H1 (cell line): ENCODE measurements at regions of chr12 and their contacts with region 1.

Region 1: GRCh38 chr12:53054112-53054833 is 4.4 kb downstream of the TNS2 start:
- DNase-seq: peak; percentile 87 to 97
- H3K4me3 ChIP-seq: peak overlapping the region; percentile 82 to 86 (median 84)
- H3K27ac ChIP-seq: peak overlapping the region; percentile 75; the same call in 1 of the 2 replicates
- H3K4me1 ChIP-seq: peaks cover 4 to 30% (median 23%) of the 10 kb centered on the region in 4 experiments
- H3K27me3 ChIP-seq: peaks cover 0 to 12% (median 3%) of the 10 kb centered on the region in 4 experiments; a peak in 4 of 7 replicates
- CTCF ChIP-seq: no peak
- EP300 ChIP-seq: no peak
- POLR2A ChIP-seq: peak in 1 of 2 experiments; percentile 86; a peak in 2 of 3 replicates
- RAD21 ChIP-seq: no peak

Region 2: GRCh38 chr12:52847335-52848102 is 206.8 kb before region 1 on chr12:
- CTCF ChIA-PET with region 1: no interaction called
- POLR2A ChIA-PET with region 1: no interaction called
- DNase-seq: no peak
- H3K4me3 ChIP-seq: no peak overlapping the region
- H3K27ac ChIP-seq: no peak overlapping the region
- H3K4me1 ChIP-seq: no peaks in the 10 kb centered on the region
- H3K27me3 ChIP-seq: no peaks in the 10 kb centered on the region; a peak in 1 of 7 replicates
- CTCF ChIP-seq: no peak
- EP300 ChIP-seq: no peak
- POLR2A ChIP-seq: no peak
- RAD21 ChIP-seq: no peak

Region 3: DNA sequence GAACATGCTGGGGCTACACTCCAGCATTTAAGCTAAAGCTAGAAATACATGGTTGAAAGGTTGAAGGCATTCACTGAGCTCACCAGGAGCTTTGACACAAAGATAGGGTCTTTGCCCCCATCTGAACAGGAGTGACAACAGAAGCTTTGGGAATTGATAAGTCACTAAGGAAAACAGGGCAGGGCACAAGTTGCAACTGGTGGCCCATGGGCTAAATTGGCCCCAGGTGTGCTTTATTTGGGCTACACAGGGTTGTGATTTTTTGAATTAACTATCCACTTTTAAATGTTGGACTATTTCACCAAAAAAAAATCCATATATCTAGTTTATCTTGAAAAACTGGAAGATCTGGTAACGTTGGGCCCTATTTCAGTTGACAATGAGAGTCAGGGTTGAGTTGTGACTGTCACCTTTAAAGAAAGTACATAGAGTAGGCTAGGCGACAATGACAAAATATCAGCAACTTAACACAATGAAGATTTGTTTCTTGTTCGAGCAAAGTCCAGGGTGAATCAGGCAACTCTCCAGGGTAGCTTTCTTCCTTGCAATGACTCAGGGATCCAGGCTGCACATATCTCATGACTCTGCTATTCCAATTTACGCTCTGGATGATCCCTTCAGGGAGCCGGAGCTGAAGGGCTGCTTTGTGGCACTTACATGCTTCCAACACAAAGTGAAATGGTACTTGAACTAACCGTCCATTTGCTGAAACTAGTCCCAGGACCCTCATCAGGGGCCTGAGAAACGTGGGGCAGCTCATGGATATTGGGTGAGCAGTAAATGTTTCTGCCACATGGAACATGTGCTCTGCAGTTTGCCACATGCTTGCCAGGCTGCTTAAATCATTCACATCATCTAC is 61.3 kb before region 1 on chr12:
- CTCF ChIA-PET with region 1: no interaction called
- POLR2A ChIA-PET with region 1: no interaction called
- DNase-seq: no peak
- H3K4me3 ChIP-seq: no peak overlapping the region
- H3K27ac ChIP-seq: no peak overlapping the region
- H3K4me1 ChIP-seq: peaks cover 0 to 4% (median 0%) of the 10 kb centered on the region in 4 experiments; a peak in 1 of 7 replicates
- H3K27me3 ChIP-seq: no peaks in the 10 kb centered on the region
- CTCF ChIP-seq: no peak
- EP300 ChIP-seq: no peak
- POLR2A ChIP-seq: no peak
- RAD21 ChIP-seq: no peak

Region 4: GRCh38 chr12:53039851-53040250 is 14.4 kb before region 1 on chr12:
- CTCF ChIA-PET with region 1: interaction called, 258 read pairs
- POLR2A ChIA-PET with region 1: interaction called, 23 read pairs
- DNase-seq: no peak
- H3K4me3 ChIP-seq: no peak overlapping the region
- H3K27ac ChIP-seq: no peak overlapping the region
- H3K4me1 ChIP-seq: peaks cover 2 to 15% (median 9%) of the 10 kb centered on the region in 4 experiments; a peak in 6 of 7 replicates
- H3K27me3 ChIP-seq: peaks cover 0 to 9% (median 8%) of the 10 kb centered on the region in 4 experiments; a peak in 6 of 7 replicates
- CTCF ChIP-seq: no peak
- EP300 ChIP-seq: no peak
- POLR2A ChIP-seq: no peak
- RAD21 ChIP-seq: no peak

Region 5: DNA sequence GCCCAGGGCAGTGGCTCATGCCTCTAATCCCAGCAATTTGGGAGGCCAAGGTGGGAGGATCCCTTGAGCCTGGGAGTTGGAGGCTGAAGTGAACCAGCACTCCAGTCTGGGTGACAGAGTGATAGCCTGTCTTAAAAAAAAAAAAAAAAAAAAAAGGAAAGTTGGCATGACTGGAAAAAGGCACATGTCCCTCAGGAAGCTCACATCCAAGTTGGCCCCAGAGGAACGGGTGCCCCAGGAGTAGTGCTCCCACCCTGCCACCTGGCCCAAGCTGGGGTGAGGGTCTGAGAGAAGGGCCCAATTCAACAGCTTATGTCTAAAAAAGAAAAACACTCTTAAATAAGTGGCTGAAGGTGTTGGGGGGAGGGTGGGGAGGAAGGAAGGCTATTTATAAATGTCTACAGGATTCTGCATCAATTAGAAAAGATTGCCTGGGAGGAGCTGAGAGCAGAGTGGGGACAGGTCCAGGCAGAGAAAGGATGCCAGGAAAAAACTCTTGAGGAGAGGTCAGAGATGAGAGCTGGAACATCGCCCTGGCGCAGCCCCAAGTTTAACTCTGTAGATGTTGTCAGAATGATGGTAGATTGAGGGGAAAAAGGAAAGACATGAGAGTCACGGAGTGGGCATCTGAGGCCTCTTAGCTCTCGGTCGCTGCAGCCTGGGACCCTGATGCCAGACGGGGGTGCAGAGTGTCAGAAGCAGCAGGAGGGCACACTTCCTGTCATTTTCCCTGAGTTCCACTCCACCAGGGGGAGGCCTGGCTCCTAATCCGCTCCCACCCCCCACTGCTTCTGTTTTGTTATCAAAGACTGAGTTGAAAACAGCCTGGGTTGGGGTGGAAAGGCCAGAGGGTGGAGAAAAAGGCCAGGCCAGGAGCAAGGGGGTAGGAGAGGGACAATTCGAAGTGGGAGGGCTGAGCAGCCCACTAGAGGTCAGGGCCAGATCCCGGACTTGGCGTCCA is 17.6 kb after region 1 on chr12:
- CTCF ChIA-PET with region 1: interaction called, 258 read pairs
- POLR2A ChIA-PET with region 1: interaction called, 16 read pairs
- DNase-seq: no peak
- H3K4me3 ChIP-seq: no peak overlapping the region
- H3K27ac ChIP-seq: no peak overlapping the region
- H3K4me1 ChIP-seq: peaks cover 4 to 16% (median 10%) of the 10 kb centered on the region in 4 experiments
- H3K27me3 ChIP-seq: peaks cover 0 to 2% (median under 1%) of the 10 kb centered on the region in 4 experiments; a peak in 2 of 7 replicates
- CTCF ChIP-seq: peak in 2 of 3 experiments; percentile 7 to 9; a peak in 1 of 4 replicates
- EP300 ChIP-seq: no peak
- POLR2A ChIP-seq: no peak
- RAD21 ChIP-seq: peak in 1 of 2 experiments; percentile 10; a peak in 1 of 4 replicates

Region 6: GRCh38 chr12:53207042-53207441 is 152.8 kb after region 1 on chr12 and contains the start of gene ITGB7:
- CTCF ChIA-PET with region 1: no interaction called
- POLR2A ChIA-PET with region 1: no interaction called
- DNase-seq: no peak
- H3K4me3 ChIP-seq: no peak within 1 kb of the TSS
- H3K27ac ChIP-seq: no peak within 1 kb of the TSS
- H3K4me1 ChIP-seq: peaks cover 0 to 2% (median 0%) of the 10 kb centered on the region in 4 experiments; a peak in 1 of 7 replicates
- H3K27me3 ChIP-seq: no peaks in the 10 kb centered on the region; a peak in 1 of 7 replicates
- CTCF ChIP-seq: no peak
- EP300 ChIP-seq: no peak
- POLR2A ChIP-seq: no peak
- RAD21 ChIP-seq: no peak
- total RNA-seq, gene ITGB7: 0.54 and 1.2 TPM in 2 replicates